Right ventricle myocardium inferior (tissue), 1 donor: ENCODE measurements at regions of chr5 and their contacts with region 1.

Region 1: DNA sequence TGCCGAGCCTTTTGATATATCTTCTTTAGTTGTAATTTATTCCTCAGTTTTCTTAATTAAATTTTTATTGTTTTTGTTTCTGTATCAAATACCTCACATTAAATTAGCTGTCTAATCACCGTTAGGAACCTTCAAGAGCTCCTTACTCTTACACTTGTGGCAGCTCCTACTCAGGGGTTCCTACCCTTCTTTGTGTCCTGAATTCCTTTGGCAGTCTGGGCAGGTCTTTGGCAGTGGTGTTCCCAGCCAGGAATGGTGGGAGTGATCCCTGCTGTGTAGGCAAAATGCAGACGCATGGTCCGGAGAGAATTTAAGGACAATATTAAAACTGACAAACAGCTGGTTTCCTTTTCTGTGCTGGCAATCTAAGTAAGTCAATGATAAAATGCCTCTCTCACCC is 41.8 kb downstream of the MAST4 start:
- DNase-seq: no peak
- ATAC-seq: no peak

Region 2: DNA sequence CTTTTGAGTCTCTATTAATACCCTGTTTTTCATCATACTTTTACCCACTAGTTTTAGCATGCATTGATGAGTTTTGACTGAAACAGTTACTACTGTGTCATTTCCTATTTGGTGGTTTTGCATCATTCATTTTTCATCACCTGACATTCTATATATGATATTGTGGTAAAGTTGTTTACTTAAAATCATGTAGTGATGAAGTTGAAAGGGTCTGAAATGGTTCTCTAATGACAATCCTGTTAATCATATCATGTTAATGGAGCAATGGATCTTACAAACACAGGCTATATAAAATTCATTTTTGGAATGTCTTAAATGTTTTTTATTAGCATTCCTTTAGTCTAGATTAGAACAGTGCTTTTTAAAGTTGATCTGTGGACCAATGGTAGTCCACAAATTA is 627.5 kb before region 1 on chr5:
- intact Hi-C with region 1: no loop called
- DNase-seq: no peak
- ATAC-seq: no peak

Region 3: GRCh38 chr5:66503203-66503789 is 134.7 kb before region 1 on chr5:
- intact Hi-C with region 1: no loop called
- DNase-seq: no peak
- ATAC-seq: no peak

Region 4: GRCh38 chr5:66518716-66519171 is 119.2 kb before region 1 on chr5:
- intact Hi-C with region 1: no loop called
- DNase-seq: no peak
- ATAC-seq: no peak

Region 5: DNA sequence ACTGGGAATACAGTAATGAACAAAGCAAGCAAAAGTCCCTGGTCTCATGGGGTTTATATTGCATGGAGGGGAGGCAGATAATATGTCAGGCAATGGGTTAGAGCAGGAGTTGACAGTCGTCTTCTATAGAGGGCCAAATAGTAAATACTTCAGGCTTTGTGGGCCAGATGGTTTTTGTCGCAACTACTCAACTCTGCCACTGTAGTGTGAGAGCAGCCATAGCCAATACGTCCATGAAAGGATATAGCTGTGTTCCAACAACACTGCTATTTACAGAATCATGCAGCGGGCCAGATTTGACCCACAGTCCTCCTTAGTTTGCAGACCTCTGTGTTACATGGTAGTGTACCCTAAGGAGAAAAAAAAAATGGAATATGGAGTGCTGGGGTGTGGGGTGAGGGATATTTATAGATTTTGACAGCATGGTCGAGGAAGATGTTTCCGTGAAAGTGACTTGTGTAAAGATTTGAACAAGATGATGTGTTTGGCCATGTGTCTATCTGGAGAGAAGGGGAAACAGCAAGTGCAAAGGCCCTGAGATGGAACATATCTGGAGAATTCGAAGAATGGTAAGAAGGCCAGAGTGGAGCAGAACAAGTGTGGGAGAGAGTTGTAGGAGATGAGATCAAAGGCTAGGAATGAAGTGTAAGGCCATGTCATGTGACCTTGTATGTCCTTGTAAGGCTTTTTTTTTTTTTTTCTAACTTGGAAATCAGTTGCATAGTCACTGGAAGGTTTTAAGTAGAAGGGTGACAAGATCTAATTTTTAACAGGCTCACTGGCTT is 16.1 kb before region 1 on chr5:
- intact Hi-C with region 1: loop called (anchors 1 kb)
- DNase-seq: no peak
- ATAC-seq: no peak

Region 6: DNA sequence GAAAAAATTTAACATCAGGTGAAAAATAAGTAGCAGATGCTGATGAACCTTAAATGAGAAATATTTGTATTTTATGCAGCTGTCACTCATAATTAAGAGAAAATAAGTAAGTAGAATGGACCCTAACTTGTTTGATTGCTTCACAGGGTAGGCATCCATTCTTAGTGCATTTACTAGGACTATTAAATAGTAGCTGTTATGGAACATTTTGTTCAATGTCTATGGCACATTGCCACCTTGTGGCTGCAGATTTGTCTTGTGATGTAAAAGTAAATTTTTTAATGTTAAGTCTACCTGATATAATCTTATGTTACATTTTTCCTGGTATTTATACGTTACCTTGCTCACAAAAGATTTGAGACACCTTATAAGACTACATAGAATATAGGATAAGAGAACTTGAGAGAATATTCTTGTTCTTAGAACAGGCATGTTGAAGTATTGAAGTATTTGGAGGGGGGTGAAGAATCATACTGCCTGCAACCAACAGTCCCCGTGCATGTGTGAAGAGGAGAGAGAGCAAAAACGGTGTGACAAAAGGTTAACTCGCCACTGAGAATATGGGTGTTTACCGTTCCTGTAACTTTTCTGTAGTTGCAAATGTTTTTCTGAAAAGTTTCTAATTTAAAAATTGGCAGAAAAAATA is 119.3 kb after region 1 on chr5:
- intact Hi-C with region 1: no loop called
- DNase-seq: no peak
- ATAC-seq: peak; percentile 69